ENCODE measurements at regions of chr1 and their contacts with region 1.

Region 1: GRCh38 chr1:20521960-20522861 is 14.3 kb upstream of the MUL1 start:
- DNase-seq: peak; percentile 71
- H3K4me3 ChIP-seq: no peak overlapping the region
- H3K27ac ChIP-seq: no peak overlapping the region
- H3K4me1 ChIP-seq: no peaks in the 10 kb centered on the region
- H3K27me3 ChIP-seq: no peaks in the 10 kb centered on the region
- CTCF ChIP-seq: peak; percentile 63 to 89 (median 83)
- POLR2A ChIP-seq: no peak

Region 2: GRCh38 chr1:20633190-20634064 is 111.2 kb after region 1 on chr1 and contains the start of gene PINK1:
- intact Hi-C with region 1: loop called (anchors 2 kb)
- DNase-seq: peak; percentile 73
- H3K4me3 ChIP-seq: peak within 1 kb of the TSS; percentile 96 to 97
- H3K27ac ChIP-seq: peak within 1 kb of the TSS; percentile 96 to 97
- H3K4me1 ChIP-seq: peaks cover 2% of the 10 kb centered on the region
- H3K27me3 ChIP-seq: no peaks in the 10 kb centered on the region
- CTCF ChIP-seq: peak; percentile 95 to 99 (median 98)
- POLR2A ChIP-seq: peak; percentile 65
- total RNA-seq, gene PINK1: 115 to 136 TPM

Measured in prostate gland (tissue), 2 donors.